PC-9 (cell line): ENCODE measurements at regions of chr3 and their contacts with region 1.

Region 1: GRCh38 chr3:5194341-5195159 is 7.0 kb downstream of the EDEM1 start:
- DNase-seq: peak; percentile 31 to 91
- H3K4me3 ChIP-seq: peak overlapping the region; percentile 19; the same call in 1 of the 2 replicates
- H3K27ac ChIP-seq: peak overlapping the region; percentile 100
- H3K4me1 ChIP-seq: peaks cover 88% of the 10 kb centered on the region
- H3K27me3 ChIP-seq: no peaks in the 10 kb centered on the region
- CTCF ChIP-seq: no peak

Region 2: DNA sequence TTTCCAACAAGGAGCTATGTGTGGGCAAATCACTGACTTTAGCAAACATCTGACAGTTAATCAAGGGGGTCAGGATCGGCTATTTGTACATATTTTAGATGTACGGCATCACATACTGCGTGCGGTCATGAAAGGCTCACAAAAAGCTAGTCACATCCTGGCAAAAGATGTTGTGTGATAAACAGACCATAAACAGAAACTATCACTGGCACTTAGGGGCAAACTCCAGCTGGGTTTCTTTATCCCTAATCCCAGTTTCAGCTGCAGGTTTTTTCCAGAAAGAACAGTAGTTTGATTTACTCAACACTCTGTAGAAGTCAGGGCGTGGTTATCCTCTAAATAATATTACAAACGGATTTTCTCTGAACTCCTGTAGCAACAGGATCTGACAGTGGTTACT is 327.7 kb before region 1 on chr3:
- CTCF ChIA-PET with region 1: no interaction called
- POLR2A ChIA-PET with region 1: no interaction called
- intact Hi-C with region 1: no loop called
- DNase-seq: no peak
- H3K4me3 ChIP-seq: peak overlapping the region; percentile 67; the same call in 1 of the 2 replicates
- H3K27ac ChIP-seq: peak overlapping the region; percentile 86
- H3K4me1 ChIP-seq: peaks cover 24% of the 10 kb centered on the region
- H3K27me3 ChIP-seq: no peaks in the 10 kb centered on the region
- CTCF ChIP-seq: no peak

Region 3: GRCh38 chr3:5016218-5017161 is 178.1 kb before region 1 on chr3:
- CTCF ChIA-PET with region 1: no interaction called
- POLR2A ChIA-PET with region 1: no interaction called
- intact Hi-C with region 1: loop called (anchors 5 kb)
- DNase-seq: peak; percentile 67 to 87
- H3K4me3 ChIP-seq: no peak overlapping the region
- H3K27ac ChIP-seq: peak overlapping the region; percentile 63
- H3K4me1 ChIP-seq: peaks cover 64% of the 10 kb centered on the region
- H3K27me3 ChIP-seq: no peaks in the 10 kb centered on the region
- CTCF ChIP-seq: no peak

Region 4: GRCh38 chr3:5168110-5168509 is 26.4 kb before region 1 on chr3:
- CTCF ChIA-PET with region 1: interaction called, 5 read pairs
- POLR2A ChIA-PET with region 1: interaction called, 10 read pairs
- intact Hi-C with region 1: no loop called
- DNase-seq: no peak
- H3K4me3 ChIP-seq: no peak overlapping the region
- H3K27ac ChIP-seq: no peak overlapping the region
- H3K4me1 ChIP-seq: no peaks in the 10 kb centered on the region
- H3K27me3 ChIP-seq: no peaks in the 10 kb centered on the region
- CTCF ChIP-seq: no peak